ENCODE measurements at regions of chr3 and their contacts with region 1.

Region 1: DNA sequence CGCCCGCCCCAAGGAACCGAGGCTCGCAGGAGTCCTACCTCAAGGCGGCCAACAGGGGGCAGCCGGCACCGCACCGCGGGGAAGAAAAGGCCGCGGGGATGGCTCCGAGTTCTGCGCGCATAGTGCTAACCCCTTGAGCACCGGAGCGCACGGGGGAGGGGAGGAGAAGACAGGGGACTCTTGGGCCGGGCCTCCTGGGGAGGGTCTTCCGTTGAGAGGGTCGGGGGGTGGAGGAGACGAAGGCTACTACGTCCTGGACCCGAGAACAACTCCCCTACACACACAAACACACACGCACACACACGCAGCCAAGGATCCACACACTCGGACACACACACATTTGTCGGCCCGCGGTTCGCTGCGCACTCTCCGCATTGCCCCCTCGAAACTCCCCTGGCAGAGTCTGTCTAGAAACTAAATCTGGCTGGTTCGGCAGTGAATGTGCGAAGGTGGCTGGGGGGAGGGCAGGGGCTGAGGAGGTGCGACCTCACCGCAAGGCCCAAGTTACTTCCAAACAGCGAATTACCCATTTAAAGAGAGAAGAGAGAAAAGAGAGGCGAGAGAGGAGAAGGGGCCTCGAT is 1.8 kb downstream of the WNT5A start:
- DNase-seq: peak; percentile 78
- ATAC-seq: peak; percentile 71
- H3K4me3 Mint-ChIP-seq: peak overlapping the region; percentile 17
- H3K27ac Mint-ChIP-seq: no peak overlapping the region
- H3K4me1 Mint-ChIP-seq: peaks cover 34% of the 10 kb centered on the region
- H3K27me3 Mint-ChIP-seq: peaks cover 70% of the 10 kb centered on the region

Region 2: GRCh38 chr3:54427941-54428871 is 1057.1 kb before region 1 on chr3:
- CTCF ChIA-PET with region 1: no interaction called
- POLR2A ChIA-PET with region 1: no interaction called
- intact Hi-C with region 1: loop called in 1 of 2 experiments (anchors 5 kb)
- DNase-seq: peak; percentile 69
- ATAC-seq: no peak
- H3K4me3 Mint-ChIP-seq: no peak overlapping the region
- H3K27ac Mint-ChIP-seq: no peak overlapping the region
- H3K4me1 Mint-ChIP-seq: no peaks in the 10 kb centered on the region
- H3K27me3 Mint-ChIP-seq: peaks cover 2% of the 10 kb centered on the region

Region 3: DNA sequence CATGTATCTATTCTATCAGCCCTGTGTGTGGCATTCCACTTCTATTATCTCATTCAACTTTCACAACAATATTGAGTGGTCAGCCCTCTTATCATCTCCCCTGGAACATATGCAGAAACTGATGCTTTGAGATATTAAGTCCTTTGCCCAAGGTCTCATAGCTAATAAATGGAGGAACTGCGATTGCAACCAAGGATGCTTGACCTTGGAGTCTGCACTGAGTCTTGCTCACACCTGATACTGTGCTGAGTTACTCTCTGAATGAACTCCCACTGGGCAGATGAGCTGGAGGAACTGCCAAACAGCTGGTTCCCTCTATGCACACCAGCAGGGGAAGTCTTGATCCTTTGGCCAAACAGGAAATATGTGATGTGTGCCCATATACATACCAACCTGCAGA is 146.5 kb after region 1 on chr3:
- CTCF ChIA-PET with region 1: no interaction called
- POLR2A ChIA-PET with region 1: no interaction called
- intact Hi-C with region 1: no loop called
- DNase-seq: no peak
- ATAC-seq: no peak
- H3K4me3 Mint-ChIP-seq: no peak overlapping the region
- H3K27ac Mint-ChIP-seq: no peak overlapping the region
- H3K4me1 Mint-ChIP-seq: no peaks in the 10 kb centered on the region
- H3K27me3 Mint-ChIP-seq: peaks cover 2% of the 10 kb centered on the region

Region 4: GRCh38 chr3:55746808-55747413 is 261.6 kb after region 1 on chr3:
- CTCF ChIA-PET with region 1: no interaction called
- POLR2A ChIA-PET with region 1: no interaction called
- intact Hi-C with region 1: loop called (anchors 2 to 10 kb)
- DNase-seq: no peak
- ATAC-seq: no peak
- H3K4me3 Mint-ChIP-seq: no peak overlapping the region
- H3K27ac Mint-ChIP-seq: no peak overlapping the region
- H3K4me1 Mint-ChIP-seq: no peaks in the 10 kb centered on the region
- H3K27me3 Mint-ChIP-seq: peaks cover 3% of the 10 kb centered on the region

Region 5: GRCh38 chr3:55790620-55791350 is 305.5 kb after region 1 on chr3:
- CTCF ChIA-PET with region 1: no interaction called
- POLR2A ChIA-PET with region 1: no interaction called
- intact Hi-C with region 1: no loop called
- DNase-seq: no peak
- ATAC-seq: no peak
- H3K4me3 Mint-ChIP-seq: no peak overlapping the region
- H3K27ac Mint-ChIP-seq: no peak overlapping the region
- H3K4me1 Mint-ChIP-seq: no peaks in the 10 kb centered on the region
- H3K27me3 Mint-ChIP-seq: no peaks in the 10 kb centered on the region

Region 6: DNA sequence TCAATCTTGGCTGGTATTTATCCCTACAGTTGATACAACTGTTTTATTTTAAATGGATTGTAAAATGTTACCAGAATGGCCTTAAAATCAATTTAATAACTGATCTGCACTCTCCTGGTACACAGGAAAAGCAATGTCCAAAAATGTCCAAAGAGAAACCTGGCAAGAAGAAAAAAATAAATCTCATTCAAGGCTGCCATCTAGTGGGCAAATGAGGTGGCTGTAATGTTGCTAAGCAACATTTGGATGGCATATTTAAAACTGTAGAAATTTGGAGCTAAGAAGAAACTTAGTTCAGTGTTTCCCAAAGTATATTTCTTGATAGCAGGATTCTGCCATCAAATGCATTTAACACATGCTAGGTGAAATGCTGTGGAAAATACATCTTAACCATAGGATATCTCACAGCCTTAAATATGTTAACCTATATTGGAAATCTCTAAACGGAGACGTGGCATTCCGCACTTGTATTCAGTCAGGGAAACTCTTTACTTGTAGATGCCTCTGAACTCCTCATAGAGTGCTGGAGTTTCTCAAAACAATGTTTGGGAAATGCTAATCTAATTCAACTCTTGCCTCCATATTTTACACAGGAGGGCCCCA is 766.1 kb after region 1 on chr3:
- CTCF ChIA-PET with region 1: no interaction called
- POLR2A ChIA-PET with region 1: no interaction called
- intact Hi-C with region 1: loop called (anchors 1 to 5 kb)
- DNase-seq: peak; percentile 43
- ATAC-seq: no peak
- H3K4me3 Mint-ChIP-seq: no peak overlapping the region
- H3K27ac Mint-ChIP-seq: no peak overlapping the region
- H3K4me1 Mint-ChIP-seq: no peaks in the 10 kb centered on the region
- H3K27me3 Mint-ChIP-seq: peaks cover 3% of the 10 kb centered on the region

Region 7: DNA sequence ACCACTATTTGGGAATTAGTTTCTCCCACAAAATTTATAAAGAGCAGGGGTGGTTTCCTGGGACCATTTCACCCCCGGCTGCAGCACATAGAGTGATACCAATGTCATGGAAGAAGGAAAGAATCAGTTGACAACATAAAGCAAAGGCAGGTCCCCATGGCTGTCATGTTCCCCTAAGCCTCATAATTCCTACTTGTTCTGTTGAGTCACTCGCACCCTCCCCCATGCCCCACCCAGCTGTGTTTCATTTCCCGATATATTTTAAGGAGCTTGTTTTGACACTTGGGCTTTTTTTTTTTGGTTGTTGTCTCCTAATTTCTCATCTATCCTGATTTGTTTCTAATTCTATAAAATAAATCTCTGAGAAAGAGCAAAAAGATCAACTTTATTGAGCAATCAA is 958.1 kb after region 1 on chr3:
- CTCF ChIA-PET with region 1: no interaction called
- POLR2A ChIA-PET with region 1: no interaction called
- intact Hi-C with region 1: loop called in 1 of 2 experiments (anchors 10 kb)
- DNase-seq: no peak
- ATAC-seq: no peak
- H3K4me3 Mint-ChIP-seq: no peak overlapping the region
- H3K27ac Mint-ChIP-seq: no peak overlapping the region
- H3K4me1 Mint-ChIP-seq: no peaks in the 10 kb centered on the region
- H3K27me3 Mint-ChIP-seq: peaks cover 11% of the 10 kb centered on the region

Measured in activated CD4-positive, alpha-beta T cell treated with anti-CD3 and anti-CD28 coated beads for 36 hours (primary cell).